Heart left ventricle (tissue), 16 donors: ENCODE measurements at regions of chr19 and their contacts with region 1.

Region 1: DNA sequence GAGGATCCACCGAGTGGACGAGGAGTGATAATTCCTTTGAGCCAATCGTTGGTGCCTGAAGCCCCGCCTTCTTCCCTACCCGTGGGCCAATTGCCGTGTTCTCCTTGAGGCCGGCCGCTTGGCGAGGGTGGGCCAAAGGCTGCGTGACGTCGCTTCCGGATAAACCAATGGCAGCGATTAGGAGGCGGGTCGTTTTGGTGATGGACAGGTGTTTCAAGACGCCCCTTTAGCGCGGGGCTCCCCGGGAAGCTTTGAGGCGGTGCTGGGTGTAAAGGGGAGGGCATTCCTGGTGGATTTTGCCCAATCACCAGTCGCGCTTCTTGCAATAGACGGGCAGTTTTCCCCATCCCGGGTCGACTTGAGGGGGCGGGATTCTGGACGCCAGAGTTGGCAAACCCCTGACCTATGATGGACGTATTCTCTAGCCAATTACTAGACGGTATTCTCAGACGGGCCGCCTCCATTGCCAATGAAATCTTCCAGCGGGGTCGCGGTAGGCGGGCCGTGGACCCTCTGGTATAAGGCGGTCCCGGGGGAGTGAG is 310 bp upstream of the PRMT1 start:
- DNase-seq: peak; percentile 99 to 100 (median 100)
- ATAC-seq: peak; percentile 87 to 92 (median 91)
- H3K4me3 ChIP-seq: peak overlapping the region; percentile 71 to 100 (median 94)
- H3K27ac ChIP-seq: peak overlapping the region; percentile 80 to 100 (median 95)
- H3K4me1 ChIP-seq: peaks cover 0 to 56% (median 41%) of the 10 kb centered on the region in 12 donors
- H3K27me3 ChIP-seq: no peaks in the 10 kb centered on the region
- CTCF ChIP-seq: no peak
- POLR2A ChIP-seq: no peak

Region 2: DNA sequence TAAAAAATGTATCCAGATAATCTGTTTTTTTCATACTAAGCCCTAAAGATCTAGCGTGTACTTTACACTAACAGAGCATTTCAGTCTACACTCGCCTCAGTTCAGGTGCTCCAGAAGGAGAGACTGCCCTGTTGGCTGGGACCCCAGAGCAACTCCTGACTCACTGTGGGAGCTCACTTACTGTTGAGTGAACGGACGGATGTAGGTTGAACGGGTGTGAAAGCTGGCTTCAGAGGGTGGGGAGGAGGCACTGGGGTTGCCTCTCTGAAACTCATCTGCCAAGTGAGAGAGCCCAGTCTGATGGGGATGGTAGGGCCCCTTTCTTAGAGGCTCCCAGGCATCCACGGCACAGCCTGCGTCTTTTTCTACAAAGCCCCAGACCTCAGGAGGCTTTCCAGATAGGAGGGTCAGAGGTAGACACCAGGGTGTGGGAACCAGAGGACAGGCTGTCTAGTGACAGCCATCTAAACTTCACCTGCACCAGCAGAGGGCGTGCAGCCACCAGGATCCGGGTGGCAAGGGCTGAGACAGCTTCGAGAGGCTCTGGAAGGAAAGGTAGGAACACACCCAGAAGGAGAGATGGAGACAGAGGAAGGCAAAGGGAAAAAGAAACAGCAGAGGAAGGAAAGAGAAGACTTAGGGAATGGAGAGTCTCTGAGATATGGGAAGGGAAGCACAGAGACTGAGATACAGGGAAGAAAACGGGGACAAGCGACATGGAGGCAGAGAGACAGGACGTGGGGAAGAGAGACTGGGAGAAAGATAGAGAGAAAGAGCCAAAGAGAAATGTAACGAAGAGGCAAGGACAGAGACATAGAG is 285.0 kb before region 1 on chr19:
- intact Hi-C with region 1: loop called in 1 of 10 experiments (anchors 10 kb)
- DNase-seq: peak; percentile 66 to 89 (median 81)
- ATAC-seq: peak; percentile 66 to 89 (median 86)
- H3K4me3 ChIP-seq: no peak overlapping the region
- H3K27ac ChIP-seq: no peak overlapping the region
- H3K4me1 ChIP-seq: peaks cover 0 to 6% (median 0%) of the 10 kb centered on the region in 12 donors
- H3K27me3 ChIP-seq: peaks cover 0 to 36% (median 0%) of the 10 kb centered on the region in 9 donors
- CTCF ChIP-seq: peak; percentile 70 to 88 (median 78)
- POLR2A ChIP-seq: no peak

Region 3: GRCh38 chr19:49502866-49503581 is 173.7 kb before region 1 on chr19:
- intact Hi-C with region 1: loop called in 3 of 10 experiments (anchors 5 kb)
- DNase-seq: peak in 1 of 5 donors; percentile 49
- ATAC-seq: peak; percentile 16 to 61 (median 54)
- H3K4me3 ChIP-seq: no peak overlapping the region
- H3K27ac ChIP-seq: peak overlapping the region in 1 of 12 donors; percentile 48
- H3K4me1 ChIP-seq: peaks cover 5 to 51% (median 26%) of the 10 kb centered on the region in 12 donors
- H3K27me3 ChIP-seq: no peaks in the 10 kb centered on the region
- CTCF ChIP-seq: peak; percentile 47 to 81 (median 65)
- POLR2A ChIP-seq: no peak

Region 4: DNA sequence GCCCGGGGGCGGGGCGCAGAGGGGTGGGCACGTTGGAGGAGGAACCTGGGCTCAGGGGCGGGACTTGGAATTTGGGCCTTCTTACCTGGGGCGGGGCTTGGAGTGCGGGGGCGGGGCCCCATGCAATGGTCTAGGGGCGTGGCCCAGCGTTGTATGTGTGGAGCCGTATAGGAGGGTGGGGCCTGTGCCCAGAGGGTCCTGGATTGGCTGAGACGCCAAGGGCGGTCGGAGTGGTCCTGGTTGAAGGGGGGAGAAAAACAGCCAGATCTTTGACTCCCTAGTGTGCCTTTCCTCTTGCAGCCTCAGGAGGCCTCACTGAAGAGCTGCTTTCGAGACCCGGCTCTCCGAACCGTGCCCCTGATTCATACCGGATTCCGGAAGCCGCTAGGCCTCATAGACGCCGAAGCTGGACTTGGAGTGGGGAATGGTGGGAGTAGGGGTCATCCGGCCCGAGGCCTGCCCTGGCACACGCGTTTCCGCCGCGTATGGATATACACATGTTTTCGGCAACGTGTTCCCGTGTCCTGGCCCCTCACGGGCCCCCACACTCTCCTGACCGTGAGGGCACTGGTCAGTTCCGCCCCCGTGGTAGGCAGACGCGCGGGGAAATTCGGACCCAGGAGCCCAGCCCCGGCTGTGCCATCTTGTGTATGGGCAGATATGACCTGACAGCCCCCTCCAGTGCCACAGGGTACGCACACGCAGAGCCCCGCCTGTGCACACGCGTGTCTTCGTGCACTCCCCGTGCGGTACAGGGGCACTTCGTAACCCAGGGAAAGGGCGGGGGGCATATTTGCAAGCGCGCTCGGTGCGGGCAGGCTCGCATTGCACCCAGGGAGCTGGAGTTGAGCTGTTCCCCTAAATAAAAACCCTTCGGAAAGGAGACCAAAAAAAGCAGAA is 86.4 kb before region 1 on chr19:
- intact Hi-C with region 1: loop called in 4 of 10 experiments (anchors 5 to 10 kb)
- DNase-seq: peak; percentile 93 to 97 (median 97)
- ATAC-seq: peak; percentile 86 to 91 (median 89)
- H3K4me3 ChIP-seq: peak overlapping the region; percentile 68 to 96 (median 80)
- H3K27ac ChIP-seq: peak overlapping the region; percentile 82 to 99 (median 94)
- H3K4me1 ChIP-seq: peaks cover 5 to 35% (median 20%) of the 10 kb centered on the region in 12 donors
- H3K27me3 ChIP-seq: no peaks in the 10 kb centered on the region
- CTCF ChIP-seq: peak in 1 of 12 donors; percentile 10
- POLR2A ChIP-seq: peak in 1 of 2 donors; percentile 73

Region 5: DNA sequence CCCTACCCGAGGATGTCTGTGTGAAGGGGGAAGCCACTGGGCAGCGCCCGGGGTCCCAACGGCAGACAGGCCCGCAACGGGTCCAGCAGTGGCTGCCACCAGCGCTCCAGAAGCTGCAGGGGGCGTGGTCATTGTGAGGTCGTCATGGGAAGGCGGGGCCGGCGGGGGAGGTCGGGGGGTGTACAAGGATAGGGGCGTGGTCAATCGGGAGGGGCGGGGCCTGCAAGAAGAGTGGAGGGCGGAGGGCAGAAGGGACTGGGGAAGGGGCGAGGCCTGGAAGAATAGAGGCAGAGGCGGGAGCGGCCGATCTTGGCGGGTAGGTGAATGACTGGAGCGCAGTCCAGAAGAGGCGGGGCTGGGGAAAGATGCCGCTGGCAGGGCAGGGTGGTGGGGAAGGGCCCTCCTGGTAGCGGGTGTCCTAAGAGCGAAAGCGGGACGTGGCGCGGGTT is 132.0 kb after region 1 on chr19:
- intact Hi-C with region 1: loop called in 3 of 10 experiments (anchors 2 to 5 kb)
- DNase-seq: peak; percentile 94 to 97 (median 95)
- ATAC-seq: peak; percentile 39 to 78 (median 77)
- H3K4me3 ChIP-seq: peak overlapping the region; percentile 60 to 99 (median 74)
- H3K27ac ChIP-seq: peak overlapping the region; percentile 72 to 90 (median 88)
- H3K4me1 ChIP-seq: peaks cover 0 to 37% (median 18%) of the 10 kb centered on the region in 12 donors
- H3K27me3 ChIP-seq: no peaks in the 10 kb centered on the region
- CTCF ChIP-seq: no peak
- POLR2A ChIP-seq: peak in 1 of 2 donors; percentile 41

Region 6: GRCh38 chr19:49869441-49870176 is 192.8 kb after region 1 on chr19:
- intact Hi-C with region 1: loop called in 2 of 10 experiments (anchors 5 to 10 kb)
- DNase-seq: peak; percentile 97
- ATAC-seq: peak; percentile 80 to 91 (median 86)
- H3K4me3 ChIP-seq: peak overlapping the region; percentile 36 to 79 (median 60)
- H3K27ac ChIP-seq: peak overlapping the region; percentile 83 to 98 (median 94)
- H3K4me1 ChIP-seq: peaks cover 9 to 58% (median 43%) of the 10 kb centered on the region in 12 donors
- H3K27me3 ChIP-seq: no peaks in the 10 kb centered on the region
- CTCF ChIP-seq: peak in 2 of 12 donors; percentile 12 to 33
- POLR2A ChIP-seq: peak; percentile 77 to 91